ENCODE measurements at regions of chr3 and their contacts with region 1.

Region 1: DNA sequence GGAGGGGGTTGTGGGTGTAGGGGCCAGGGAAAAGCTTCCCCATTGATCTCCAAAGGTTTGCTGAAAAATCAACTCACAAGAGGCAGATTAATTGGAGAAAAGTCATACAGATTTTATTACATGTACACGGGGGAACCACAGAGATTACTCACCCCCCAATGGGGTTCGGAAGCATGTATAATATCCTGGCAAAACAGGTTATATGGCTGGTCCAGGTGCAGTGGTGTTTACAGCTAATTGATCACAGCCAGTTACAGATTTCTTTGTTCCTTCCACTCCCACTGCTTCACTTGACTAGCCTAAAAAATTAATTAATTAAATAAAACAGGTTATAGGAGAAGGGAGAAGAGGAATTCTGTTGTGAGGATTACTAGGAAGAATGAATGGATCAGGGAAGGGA is 22.4 kb downstream of the PRKCI start:
- DNase-seq: no peak
- H3K4me3 ChIP-seq: no peak overlapping the region
- H3K27ac ChIP-seq: no peak overlapping the region
- H3K4me1 ChIP-seq: no peaks in the 10 kb centered on the region
- CTCF ChIP-seq: no peak

Region 2: GRCh38 chr3:170233530-170233929 is 11.0 kb before region 1 on chr3:
- CTCF ChIA-PET with region 1: no interaction called
- POLR2A ChIA-PET with region 1: interaction called, 10 read pairs
- intact Hi-C with region 1: no loop called
- DNase-seq: no peak
- H3K4me3 ChIP-seq: no peak overlapping the region
- H3K27ac ChIP-seq: no peak overlapping the region
- H3K4me1 ChIP-seq: peaks cover 12% of the 10 kb centered on the region
- CTCF ChIP-seq: no peak

Region 3: GRCh38 chr3:170368921-170369320 is 124.3 kb after region 1 on chr3:
- CTCF ChIA-PET with region 1: no interaction called
- POLR2A ChIA-PET with region 1: no interaction called
- intact Hi-C with region 1: no loop called
- DNase-seq: no peak
- H3K4me3 ChIP-seq: peak overlapping the region; percentile 69
- H3K27ac ChIP-seq: peak overlapping the region; percentile 80
- H3K4me1 ChIP-seq: peaks cover 81% of the 10 kb centered on the region
- CTCF ChIP-seq: peak; percentile 86